ENCODE measurements at regions of chr9 and their contacts with region 1.

Region 1: GRCh38 chr9:89619019-89619418 is 14.2 kb downstream of the GADD45G start:
- DNase-seq: no peak
- ATAC-seq: no peak
- H3K4me3 ChIP-seq: no peak overlapping the region
- H3K27ac ChIP-seq: peak overlapping the region in 1 of 4 donors; percentile 67
- H3K4me1 ChIP-seq: peaks cover 8 to 25% (median 24%) of the 10 kb centered on the region in 3 donors
- H3K27me3 ChIP-seq: no peaks in the 10 kb centered on the region
- CTCF ChIP-seq: no peak

Region 2: GRCh38 chr9:89670114-89670513 is 51.1 kb after region 1 on chr9:
- intact Hi-C with region 1: loop called in 1 of 3 experiments (anchors 5 kb)
- DNase-seq: peak in 2 of 6 donors; percentile 71 to 79
- ATAC-seq: peak in 2 of 4 donors; percentile 8 to 11
- H3K4me3 ChIP-seq: no peak overlapping the region
- H3K27ac ChIP-seq: peak overlapping the region; percentile 14 to 74 (median 58)
- H3K4me1 ChIP-seq: peaks cover 49 to 64% (median 63%) of the 10 kb centered on the region in 3 donors
- H3K27me3 ChIP-seq: no peaks in the 10 kb centered on the region
- CTCF ChIP-seq: no peak

Region 3: GRCh38 chr9:89732295-89732938 is 113.4 kb after region 1 on chr9:
- intact Hi-C with region 1: loop called in 1 of 3 experiments (anchors 10 kb)
- DNase-seq: no peak
- ATAC-seq: peak; percentile 36 to 75 (median 48)
- H3K4me3 ChIP-seq: no peak overlapping the region
- H3K27ac ChIP-seq: peak overlapping the region; percentile 0 to 67 (median 23)
- H3K4me1 ChIP-seq: peaks cover 23 to 27% (median 27%) of the 10 kb centered on the region in 3 donors
- H3K27me3 ChIP-seq: no peaks in the 10 kb centered on the region
- CTCF ChIP-seq: no peak

Region 4: GRCh38 chr9:89999534-90000370 is 380.7 kb after region 1 on chr9:
- intact Hi-C with region 1: loop called in 1 of 3 experiments (anchors 10 kb)
- DNase-seq: peak; percentile 81 to 95 (median 88)
- ATAC-seq: peak; percentile 91 to 94 (median 92)
- H3K4me3 ChIP-seq: peak overlapping the region in 1 of 4 donors; percentile 21
- H3K27ac ChIP-seq: peak overlapping the region; percentile 85 to 97 (median 90)
- H3K4me1 ChIP-seq: peaks cover 22 to 47% (median 41%) of the 10 kb centered on the region in 3 donors
- H3K27me3 ChIP-seq: no peaks in the 10 kb centered on the region
- CTCF ChIP-seq: no peak

Region 5: GRCh38 chr9:90477535-90477934 is 858.5 kb after region 1 on chr9:
- intact Hi-C with region 1: no loop called
- DNase-seq: no peak
- ATAC-seq: no peak
- H3K4me3 ChIP-seq: no peak overlapping the region
- H3K27ac ChIP-seq: no peak overlapping the region
- H3K4me1 ChIP-seq: no peaks in the 10 kb centered on the region
- H3K27me3 ChIP-seq: no peaks in the 10 kb centered on the region
- CTCF ChIP-seq: no peak